ENCODE measurements at regions of chr14 and their contacts with region 1.

Region 1: DNA sequence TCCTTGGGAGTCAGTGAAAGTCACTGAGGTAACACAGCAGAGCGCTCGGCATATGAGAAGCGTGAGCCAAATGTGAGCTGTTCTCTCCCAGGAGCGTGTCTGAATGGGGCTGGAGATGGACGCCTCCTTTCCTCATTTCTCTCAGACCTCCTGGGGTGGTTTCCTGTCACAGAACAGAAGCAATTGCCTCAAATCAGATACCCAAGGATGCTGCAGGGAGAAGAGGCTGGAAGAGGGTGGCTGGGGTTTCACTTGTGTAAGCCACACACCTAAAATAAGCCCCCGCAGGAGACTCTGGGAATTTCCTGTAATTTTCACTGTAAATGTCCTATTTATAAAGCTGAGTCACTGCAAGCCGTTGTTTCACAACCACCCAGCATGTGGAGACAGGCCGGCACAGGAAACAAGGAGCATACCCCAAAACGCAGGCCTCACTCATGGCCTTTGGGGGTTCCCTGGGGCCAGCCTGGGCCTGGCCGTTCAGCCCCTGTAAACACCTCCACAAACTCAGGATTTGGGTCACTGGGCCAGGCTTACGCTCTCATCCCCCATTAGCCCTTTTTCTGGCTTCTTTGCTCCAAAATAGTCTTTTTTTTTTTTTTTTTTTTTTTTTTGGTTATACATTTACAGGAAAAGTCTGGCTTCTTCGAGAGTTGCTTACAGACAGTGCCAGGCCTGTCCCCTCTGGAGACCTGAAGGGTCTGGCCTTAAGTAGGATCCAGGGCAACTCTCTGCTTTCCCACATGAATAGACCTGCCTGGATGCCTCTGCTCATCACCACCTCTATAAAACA is 55.3 kb downstream of the VCPKMT start:
- DNase-seq: peak in 6 of 9 experiments; percentile 35 to 81 (median 58)
- ATAC-seq: no peak
- H3K4me3 ChIP-seq: peak overlapping the region; percentile 36 to 44
- H3K4me3 Mint-ChIP-seq: peak overlapping the region; percentile 81
- H3K27ac ChIP-seq: peak overlapping the region; percentile 82 to 93
- H3K27ac Mint-ChIP-seq: peak overlapping the region; percentile 99
- H3K4me1 ChIP-seq: peaks cover 63% of the 10 kb centered on the region
- H3K4me1 Mint-ChIP-seq: peaks cover 85% of the 10 kb centered on the region
- H3K27me3 ChIP-seq: no peaks in the 10 kb centered on the region
- H3K27me3 Mint-ChIP-seq: no peaks in the 10 kb centered on the region
- CTCF ChIP-seq: no peak

Region 2: GRCh38 chr14:49892636-49893308 is 168.3 kb before region 1 on chr14 and contains the start of gene ARF6:
- CTCF ChIA-PET with region 1: interaction called, 11 read pairs
- POLR2A ChIA-PET with region 1: interaction called, 14 read pairs
- intact Hi-C with region 1: loop called (anchors 1 to 2 kb)
- DNase-seq: peak; percentile 90 to 98 (median 97)
- ATAC-seq: peak; percentile 76
- H3K4me3 ChIP-seq: peak within 1 kb of the TSS; percentile 87 to 92
- H3K4me3 Mint-ChIP-seq: peak within 1 kb of the TSS; percentile 97
- H3K27ac ChIP-seq: peak within 1 kb of the TSS; percentile 98 to 99
- H3K27ac Mint-ChIP-seq: peak within 1 kb of the TSS; percentile 98
- H3K4me1 ChIP-seq: peaks cover 27% of the 10 kb centered on the region
- H3K4me1 Mint-ChIP-seq: peaks cover 30% of the 10 kb centered on the region
- H3K27me3 ChIP-seq: no peaks in the 10 kb centered on the region
- H3K27me3 Mint-ChIP-seq: no peaks in the 10 kb centered on the region
- CTCF ChIP-seq: no peak
- total RNA-seq, gene ARF6: 60.9 to 62.5 TPM

Region 3: DNA sequence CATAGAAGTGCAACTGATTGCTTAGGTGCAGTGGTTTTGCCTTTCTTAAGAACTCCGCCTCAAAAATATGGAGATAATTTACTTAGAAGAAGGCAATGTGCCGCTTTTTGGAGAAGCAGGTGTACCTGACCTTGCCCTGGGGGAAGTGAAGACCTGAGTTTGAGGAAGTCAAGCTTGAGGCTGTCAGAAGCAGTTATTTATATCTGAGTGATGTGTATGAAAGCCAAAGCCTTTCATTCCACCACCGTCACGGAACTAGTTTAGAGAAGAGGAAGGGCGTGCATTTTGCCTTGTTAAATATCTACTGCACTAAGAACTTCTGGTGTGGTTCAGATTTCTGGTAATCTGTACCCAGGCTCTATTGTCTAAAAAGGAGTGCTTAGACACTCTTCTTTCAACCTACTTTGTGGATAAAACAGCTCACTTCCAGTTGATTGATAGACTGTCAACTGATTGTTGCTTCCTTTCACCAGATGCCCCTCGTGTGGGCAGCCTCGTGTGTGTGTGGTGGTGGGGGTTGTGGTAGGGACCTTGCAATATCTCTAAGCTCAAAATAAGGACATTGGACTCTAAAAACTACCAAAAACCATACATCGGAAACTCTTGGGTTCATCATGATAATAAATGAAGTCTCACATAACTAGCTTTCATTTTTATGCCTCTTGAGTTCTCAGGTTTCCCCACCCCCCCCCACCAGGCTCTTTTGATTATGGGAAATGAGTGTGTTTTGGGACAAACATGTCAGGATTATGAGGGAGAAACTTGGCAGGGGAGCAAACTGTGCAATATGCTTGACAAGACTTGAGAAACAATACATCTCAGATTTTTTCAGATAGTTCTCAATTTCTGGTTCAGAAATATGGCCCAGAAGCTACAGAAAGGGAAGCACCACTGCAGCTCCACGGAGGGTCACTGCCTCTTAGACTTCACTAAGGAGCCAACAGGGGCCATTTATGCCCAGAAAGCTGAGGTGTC is 89.6 kb before region 1 on chr14:
- CTCF ChIA-PET with region 1: interaction called, 6 read pairs
- POLR2A ChIA-PET with region 1: interaction called, 22 read pairs
- intact Hi-C with region 1: loop called in 1 of 2 experiments (anchors 1 kb)
- DNase-seq: peak in 8 of 9 experiments; percentile 31 to 83 (median 61)
- ATAC-seq: peak; percentile 84
- H3K4me3 ChIP-seq: peak overlapping the region; percentile 25 to 31
- H3K4me3 Mint-ChIP-seq: peak overlapping the region; percentile 78
- H3K27ac ChIP-seq: peak overlapping the region; percentile 62 to 87
- H3K27ac Mint-ChIP-seq: peak overlapping the region; percentile 98
- H3K4me1 ChIP-seq: peaks cover 41% of the 10 kb centered on the region
- H3K4me1 Mint-ChIP-seq: peaks cover 60% of the 10 kb centered on the region
- H3K27me3 ChIP-seq: no peaks in the 10 kb centered on the region
- H3K27me3 Mint-ChIP-seq: no peaks in the 10 kb centered on the region
- CTCF ChIP-seq: no peak

Region 4: DNA sequence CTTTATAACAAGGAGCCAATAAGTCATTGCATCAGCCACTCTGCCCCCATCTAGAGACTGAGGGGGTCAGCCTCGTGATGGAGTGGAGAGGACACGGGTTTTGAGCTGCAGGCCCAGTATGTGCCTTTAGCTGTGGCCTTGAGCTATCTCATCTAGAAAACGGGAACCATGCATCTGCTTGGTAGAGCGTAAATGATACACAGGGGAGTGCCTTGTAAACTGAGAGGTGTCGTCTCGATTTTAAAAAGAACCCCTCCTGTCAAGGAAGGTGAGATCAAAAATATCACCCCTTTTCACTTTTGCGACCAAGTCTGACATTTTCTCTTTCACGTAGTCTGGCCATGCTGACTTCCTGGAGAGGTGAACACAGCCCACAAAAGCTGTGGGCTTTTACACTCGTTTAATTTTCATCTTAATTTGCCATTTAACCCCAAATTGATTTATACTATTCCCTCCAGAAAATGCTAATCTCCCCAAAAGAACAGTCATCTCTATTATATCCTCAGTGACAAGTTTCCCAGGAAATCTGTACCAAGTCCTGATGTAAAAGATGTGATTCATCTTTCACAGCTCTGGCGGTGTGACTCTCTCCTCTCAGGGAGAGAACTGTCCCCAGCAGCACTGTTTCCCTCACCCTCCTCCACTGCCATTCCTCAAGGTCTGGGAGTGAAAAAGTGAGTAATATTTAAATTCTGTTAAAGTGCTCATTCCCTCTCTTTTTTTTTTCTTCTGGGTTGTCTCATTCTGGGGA is 24.7 kb after region 1 on chr14:
- CTCF ChIA-PET with region 1: interaction called, 20 read pairs
- POLR2A ChIA-PET with region 1: interaction called, 60 read pairs
- intact Hi-C with region 1: loop called (anchors 1 kb)
- DNase-seq: peak in 3 of 9 experiments; percentile 28 to 81 (median 65)
- ATAC-seq: peak; percentile 2
- H3K4me3 ChIP-seq: peak overlapping the region in 1 of 2 experiments; percentile 16
- H3K4me3 Mint-ChIP-seq: peak overlapping the region; percentile 66
- H3K27ac ChIP-seq: peak overlapping the region; percentile 50 to 98
- H3K27ac Mint-ChIP-seq: peak overlapping the region; percentile 92
- H3K4me1 ChIP-seq: peaks cover 86% of the 10 kb centered on the region
- H3K4me1 Mint-ChIP-seq: peaks cover 94% of the 10 kb centered on the region
- H3K27me3 ChIP-seq: no peaks in the 10 kb centered on the region
- H3K27me3 Mint-ChIP-seq: no peaks in the 10 kb centered on the region
- CTCF ChIP-seq: no peak

Region 5: DNA sequence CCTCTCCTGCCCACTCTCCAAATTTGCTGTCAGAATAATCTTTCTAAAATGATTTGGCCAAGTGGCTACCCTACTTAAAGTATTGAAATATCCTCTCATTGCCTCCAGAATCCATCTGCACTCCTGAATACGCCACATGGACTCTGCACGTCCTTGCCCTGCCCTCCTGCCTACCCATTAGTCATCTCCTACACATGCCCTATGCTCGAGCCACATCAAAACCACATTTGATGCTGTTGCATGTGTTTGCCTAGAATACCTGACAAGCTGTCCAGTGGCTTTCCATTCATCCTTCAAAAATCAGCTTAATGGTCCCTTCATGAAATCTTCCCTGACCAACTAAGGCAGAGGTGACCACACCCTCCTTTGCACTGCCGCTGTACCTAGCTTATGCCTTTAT is 38.3 kb after region 1 on chr14:
- CTCF ChIA-PET with region 1: interaction called, 32 read pairs
- POLR2A ChIA-PET with region 1: interaction called, 10 read pairs
- intact Hi-C with region 1: loop called in 1 of 2 experiments (anchors 1 kb)
- DNase-seq: no peak
- ATAC-seq: no peak
- H3K4me3 ChIP-seq: no peak overlapping the region
- H3K4me3 Mint-ChIP-seq: no peak overlapping the region
- H3K27ac ChIP-seq: no peak overlapping the region
- H3K27ac Mint-ChIP-seq: peak overlapping the region; percentile 69
- H3K4me1 ChIP-seq: peaks cover 73% of the 10 kb centered on the region
- H3K4me1 Mint-ChIP-seq: peaks cover 71% of the 10 kb centered on the region
- H3K27me3 ChIP-seq: no peaks in the 10 kb centered on the region
- H3K27me3 Mint-ChIP-seq: no peaks in the 10 kb centered on the region
- CTCF ChIP-seq: no peak